Dorsolateral prefrontal cortex (tissue), 120 donors: ENCODE measurements at regions of chr1 and their contacts with region 1.

Region 1: DNA sequence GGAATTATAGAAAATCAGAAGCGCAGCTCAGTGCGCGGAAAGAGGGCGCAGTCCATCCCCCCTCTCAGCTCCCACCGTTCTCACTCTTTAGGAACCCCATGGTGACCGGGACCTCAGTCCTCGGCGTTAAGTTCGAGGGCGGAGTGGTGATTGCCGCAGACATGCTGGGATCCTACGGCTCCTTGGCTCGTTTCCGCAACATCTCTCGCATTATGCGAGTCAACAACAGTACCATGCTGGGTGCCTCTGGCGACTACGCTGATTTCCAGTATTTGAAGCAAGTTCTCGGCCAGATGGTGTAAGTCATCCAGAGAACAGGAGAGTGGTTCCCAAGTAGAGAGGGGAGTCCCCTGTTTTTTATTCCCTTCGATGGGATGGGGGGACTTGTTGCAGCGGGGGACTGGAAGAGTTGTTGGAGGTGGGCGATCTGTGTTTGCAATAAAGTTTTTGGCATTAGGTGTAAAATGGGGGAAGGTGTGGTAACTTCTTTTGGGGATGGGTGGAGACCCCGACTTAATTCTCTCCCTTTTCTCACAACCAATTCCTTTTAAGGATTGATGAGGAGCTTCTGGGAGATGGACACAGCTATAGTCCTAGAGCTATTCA is 620 bp downstream of the PSMB4 start:
- DNase-seq: peak in 1 of 10 donors; percentile 25
- H3K4me3 ChIP-seq: peak overlapping the region; percentile 58 to 100 (median 95)
- H3K27ac ChIP-seq: peak overlapping the region; percentile 63 to 97 (median 90)
- H3K27me3 ChIP-seq: no peaks in the 10 kb centered on the region
- CTCF ChIP-seq: no peak

Region 2: GRCh38 chr1:150944856-150945255 is 455.1 kb before region 1 on chr1:
- intact Hi-C with region 1: no loop called
- DNase-seq: no peak
- H3K4me3 ChIP-seq: no peak overlapping the region
- H3K27ac ChIP-seq: no peak overlapping the region
- H3K27me3 ChIP-seq: no peaks in the 10 kb centered on the region
- CTCF ChIP-seq: no peak

Region 3: GRCh38 chr1:151165738-151166505 is 234.1 kb before region 1 on chr1 and contains the starts of genes LYSMD1 and SCNM1:
- intact Hi-C with region 1: loop called in 1 of 2 experiments (anchors 2 kb)
- DNase-seq: peak; percentile 94 to 98 (median 96)
- H3K4me3 ChIP-seq: peak within 1 kb of the TSS; percentile 57 to 98 (median 81)
- H3K27ac ChIP-seq: peak within 1 kb of the TSS; percentile 30 to 98 (median 89)
- H3K27me3 ChIP-seq: no peaks in the 10 kb centered on the region
- CTCF ChIP-seq: peak in 46 of 56 donors; percentile 7 to 64 (median 40)
- total RNA-seq, gene LYSMD1: 11.8 to 24.4 (median 17.1) TPM
- total RNA-seq, gene SCNM1: 20.8 to 38.5 (median 28.7) TPM

Region 4: GRCh38 chr1:151346769-151347522 is 53.0 kb before region 1 on chr1 and contains the start of gene RFX5:
- intact Hi-C with region 1: loop called (anchors 2 to 5 kb)
- DNase-seq: peak; percentile 79 to 97 (median 95)
- H3K4me3 ChIP-seq: peak within 1 kb of the TSS; percentile 55 to 95 (median 76)
- H3K27ac ChIP-seq: peak within 1 kb of the TSS in 58 of 59 donors; percentile 27 to 96 (median 83)
- H3K27me3 ChIP-seq: no peaks in the 10 kb centered on the region
- CTCF ChIP-seq: peak in 27 of 56 donors; percentile 6 to 51 (median 28)
- total RNA-seq, gene RFX5: 21.1 to 65.9 (median 38.7) TPM

Region 5: GRCh38 chr1:151457911-151458801 is 58.2 kb after region 1 on chr1:
- intact Hi-C with region 1: no loop called
- DNase-seq: peak; percentile 28 to 69 (median 54)
- H3K4me3 ChIP-seq: peak overlapping the region; percentile 54 to 89 (median 75)
- H3K27ac ChIP-seq: peak overlapping the region; percentile 87 to 98 (median 95)
- H3K27me3 ChIP-seq: no peaks in the 10 kb centered on the region
- CTCF ChIP-seq: peak in 6 of 56 donors; percentile 5 to 19 (median 15)